Dorsolateral prefrontal cortex (tissue), 120 donors: ENCODE measurements at regions of chr7 and their contacts with region 1.

Region 1: GRCh38 chr7:114085592-114086501 is 167.0 kb upstream of the PPP1R3A start:
- DNase-seq: peak in 7 of 10 donors; percentile 26 to 77 (median 66)
- H3K4me3 ChIP-seq: peak overlapping the region; percentile 37 to 77 (median 57)
- H3K27ac ChIP-seq: peak overlapping the region in 55 of 59 donors; percentile 29 to 89 (median 74)
- H3K27me3 ChIP-seq: peaks cover 0 to 80% (median 59%) of the 10 kb centered on the region in 45 donors
- CTCF ChIP-seq: no peak

Region 2: DNA sequence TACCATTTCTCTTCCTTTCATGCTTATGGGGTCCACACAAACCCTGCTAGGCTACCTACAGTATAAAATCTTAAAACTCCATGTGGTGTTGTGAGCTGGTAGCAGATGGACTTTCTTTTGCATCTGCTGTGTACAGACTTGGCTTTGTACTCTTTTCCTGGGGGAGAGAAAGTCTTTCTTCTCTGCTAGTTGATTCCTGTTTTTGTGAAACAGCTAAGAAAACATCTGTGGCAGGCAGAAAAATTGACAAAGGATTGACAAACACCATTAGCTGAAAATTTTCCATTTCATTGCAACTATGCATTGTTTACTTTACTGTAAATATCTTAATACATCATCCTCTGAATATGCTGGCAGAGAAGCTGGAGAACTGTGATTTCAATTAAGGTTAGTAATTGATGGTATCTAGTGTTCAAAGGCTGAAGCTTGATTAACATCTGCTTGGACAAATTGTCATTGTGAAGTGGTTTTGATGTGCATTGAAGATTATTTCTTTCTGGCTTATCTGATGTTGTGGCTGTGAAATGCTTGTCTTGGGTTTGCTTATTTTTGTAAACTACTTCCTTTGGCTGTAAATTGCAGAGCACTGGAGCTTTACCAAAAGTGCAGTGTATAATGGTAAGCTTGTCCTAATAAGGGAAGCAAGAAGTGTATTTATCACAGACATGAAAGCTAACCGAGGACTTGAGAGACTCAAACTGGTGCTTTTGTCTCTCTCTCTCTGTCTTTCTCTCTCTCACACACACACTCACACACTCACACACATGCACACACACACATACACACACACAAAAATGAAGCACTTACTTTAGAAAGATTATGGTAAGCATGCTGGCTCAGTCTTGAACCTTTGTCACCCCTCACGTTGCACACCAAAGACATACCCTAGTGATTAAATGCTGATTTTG is 328.6 kb after region 1 on chr7 and contains the start of gene FOXP2:
- intact Hi-C with region 1: loop called in 1 of 2 experiments (anchors 10 kb)
- DNase-seq: no peak
- H3K4me3 ChIP-seq: peak within 1 kb of the TSS in 54 of 59 donors; percentile 2 to 57 (median 36)
- H3K27ac ChIP-seq: peak within 1 kb of the TSS in 4 of 59 donors; percentile 6 to 48 (median 22)
- H3K27me3 ChIP-seq: peaks cover 0 to 66% (median 17%) of the 10 kb centered on the region in 45 donors
- CTCF ChIP-seq: no peak
- total RNA-seq, gene FOXP2: 3.3 to 26.9 (median 14.6) TPM

Region 3: DNA sequence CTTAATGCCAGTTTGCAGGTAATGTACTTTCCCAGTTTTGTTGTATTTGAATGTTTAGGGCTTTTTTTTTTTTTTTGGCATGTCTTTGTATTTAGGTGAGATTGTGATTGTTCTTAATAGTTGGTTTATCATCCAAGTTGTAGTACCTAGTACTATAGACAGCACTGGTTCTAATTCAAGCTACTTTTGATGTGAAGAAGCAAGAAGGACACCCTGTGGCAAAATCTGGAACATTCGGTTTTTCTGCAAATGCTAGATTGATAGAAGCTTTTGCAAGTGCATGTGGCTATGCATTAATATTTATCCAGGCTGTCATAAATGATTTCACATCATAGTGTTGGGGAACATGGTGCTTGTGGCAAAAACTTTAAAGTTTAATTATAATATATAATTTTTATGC is 577.7 kb after region 1 on chr7:
- intact Hi-C with region 1: loop called in 1 of 2 experiments (anchors 10 kb)
- DNase-seq: peak in 1 of 10 donors; percentile 18
- H3K4me3 ChIP-seq: no peak overlapping the region
- H3K27ac ChIP-seq: no peak overlapping the region
- H3K27me3 ChIP-seq: peaks cover 0 to 7% (median 0%) of the 10 kb centered on the region in 45 donors
- CTCF ChIP-seq: peak in 44 of 56 donors; percentile 14 to 64 (median 40)

Region 4: GRCh38 chr7:115851291-115851690 is 1765.4 kb after region 1 on chr7:
- intact Hi-C with region 1: loop called in 1 of 2 experiments (anchors 10 kb)
- DNase-seq: no peak
- H3K4me3 ChIP-seq: no peak overlapping the region
- H3K27ac ChIP-seq: no peak overlapping the region
- H3K27me3 ChIP-seq: peaks cover 0 to 12% (median 0%) of the 10 kb centered on the region in 45 donors
- CTCF ChIP-seq: peak in 47 of 56 donors; percentile 10 to 65 (median 36)